ENCODE measurements at regions of chr1 and their contacts with region 1.

Region 1: GRCh38 chr1:231931846-231932454 is 305.4 kb downstream of the DISC1 start:
- DNase-seq: peak; percentile 76
- ATAC-seq: peak; percentile 71
- H3K4me3 Mint-ChIP-seq: no peak overlapping the region
- H3K27ac Mint-ChIP-seq: no peak overlapping the region
- H3K4me1 Mint-ChIP-seq: peaks cover 20% of the 10 kb centered on the region
- H3K27me3 Mint-ChIP-seq: no peaks in the 10 kb centered on the region
- CTCF ChIP-seq: peak; percentile 96

Region 2: GRCh38 chr1:231866392-231867331 is 65.3 kb before region 1 on chr1:
- CTCF ChIA-PET with region 1: interaction called, 36 read pairs
- POLR2A ChIA-PET with region 1: no interaction called
- intact Hi-C with region 1: loop called (anchors 5 kb)
- DNase-seq: peak; percentile 70
- ATAC-seq: peak; percentile 47
- H3K4me3 Mint-ChIP-seq: no peak overlapping the region
- H3K27ac Mint-ChIP-seq: no peak overlapping the region
- H3K4me1 Mint-ChIP-seq: peaks cover 22% of the 10 kb centered on the region
- H3K27me3 Mint-ChIP-seq: no peaks in the 10 kb centered on the region
- CTCF ChIP-seq: peak; percentile 96

Region 3: DNA sequence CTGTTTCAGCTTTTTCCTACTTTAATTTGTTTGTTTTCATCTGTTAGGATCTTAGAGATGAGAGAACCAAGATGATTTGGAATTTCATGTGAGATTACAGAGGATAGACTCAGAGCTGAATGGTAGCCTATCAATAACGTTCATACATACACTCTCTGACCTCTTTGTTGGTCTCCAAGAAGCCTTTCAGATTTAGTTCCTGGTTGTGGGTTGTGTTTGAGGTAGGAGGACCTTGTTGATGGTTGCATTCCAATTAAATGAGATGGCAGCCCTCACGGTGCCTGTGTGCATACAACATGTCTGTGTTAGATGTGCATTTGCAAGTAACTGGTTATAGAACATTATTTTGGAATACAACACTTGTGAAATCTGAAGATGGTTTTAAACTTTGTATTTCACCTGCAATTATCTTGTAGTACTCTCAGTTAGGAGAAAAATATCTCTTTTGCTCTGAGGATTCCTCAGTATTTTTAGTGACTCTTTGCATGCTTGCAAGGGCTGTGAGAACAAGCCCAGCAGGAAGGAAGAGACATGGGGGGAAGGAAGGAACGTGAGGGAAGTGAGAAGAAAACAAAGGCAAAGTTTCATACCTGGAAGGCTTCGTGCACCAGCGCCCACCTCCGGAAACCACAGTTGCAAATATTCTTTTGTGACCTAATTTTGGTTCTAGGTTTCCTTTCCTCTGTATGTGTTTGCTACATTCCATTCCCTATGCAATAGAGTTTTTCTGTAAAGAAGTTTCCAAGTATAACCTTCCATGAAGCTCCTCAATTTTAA is 13.5 kb before region 1 on chr1:
- CTCF ChIA-PET with region 1: interaction called, 13 read pairs
- POLR2A ChIA-PET with region 1: no interaction called
- intact Hi-C with region 1: no loop called
- DNase-seq: peak; percentile 51
- ATAC-seq: peak; percentile 18
- H3K4me3 Mint-ChIP-seq: peak overlapping the region; percentile 45
- H3K27ac Mint-ChIP-seq: peak overlapping the region; percentile 84
- H3K4me1 Mint-ChIP-seq: peaks cover 76% of the 10 kb centered on the region
- H3K27me3 Mint-ChIP-seq: no peaks in the 10 kb centered on the region
- CTCF ChIP-seq: no peak

Region 4: GRCh38 chr1:231953660-231954059 is 21.7 kb after region 1 on chr1:
- CTCF ChIA-PET with region 1: no interaction called
- POLR2A ChIA-PET with region 1: no interaction called
- intact Hi-C with region 1: no loop called
- DNase-seq: no peak
- ATAC-seq: no peak
- H3K4me3 Mint-ChIP-seq: no peak overlapping the region
- H3K27ac Mint-ChIP-seq: no peak overlapping the region
- H3K4me1 Mint-ChIP-seq: peaks cover 2% of the 10 kb centered on the region
- H3K27me3 Mint-ChIP-seq: no peaks in the 10 kb centered on the region
- CTCF ChIP-seq: no peak

Region 5: DNA sequence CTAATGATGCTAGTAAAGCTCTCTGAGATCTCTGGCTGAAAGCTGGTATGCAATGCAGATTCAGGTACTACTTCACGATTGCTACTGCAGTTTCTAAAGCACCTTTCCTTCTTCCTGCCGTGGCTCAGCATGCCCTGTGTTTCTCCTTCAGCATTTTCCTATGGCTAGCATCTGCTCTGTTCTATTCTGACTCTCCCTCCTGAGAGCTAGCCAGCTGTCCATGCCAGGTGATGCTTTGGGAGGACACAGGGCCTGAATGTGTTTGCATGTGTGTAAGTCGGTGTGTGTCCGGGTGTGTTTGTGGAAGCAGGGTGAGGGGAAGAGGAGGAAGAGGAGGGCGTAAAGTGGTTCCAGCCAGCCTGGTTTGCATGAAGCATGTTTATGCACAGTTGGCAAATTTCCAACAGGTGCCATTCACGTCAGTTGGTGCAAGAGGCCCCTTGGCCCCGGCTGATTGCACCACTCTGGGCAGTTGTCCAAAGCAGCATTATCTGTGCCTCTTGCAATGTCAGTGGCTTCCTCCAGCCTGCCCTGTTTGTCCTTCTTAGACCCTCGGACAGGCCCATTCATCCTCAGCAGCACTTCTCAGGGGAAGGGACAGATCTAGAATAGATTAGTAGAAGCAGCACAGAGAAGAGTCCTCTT is 127.9 kb after region 1 on chr1:
- CTCF ChIA-PET with region 1: no interaction called
- POLR2A ChIA-PET with region 1: no interaction called
- intact Hi-C with region 1: no loop called
- DNase-seq: no peak
- ATAC-seq: no peak
- H3K4me3 Mint-ChIP-seq: no peak overlapping the region
- H3K27ac Mint-ChIP-seq: no peak overlapping the region
- H3K4me1 Mint-ChIP-seq: no peaks in the 10 kb centered on the region
- H3K27me3 Mint-ChIP-seq: no peaks in the 10 kb centered on the region
- CTCF ChIP-seq: no peak

Region 6: DNA sequence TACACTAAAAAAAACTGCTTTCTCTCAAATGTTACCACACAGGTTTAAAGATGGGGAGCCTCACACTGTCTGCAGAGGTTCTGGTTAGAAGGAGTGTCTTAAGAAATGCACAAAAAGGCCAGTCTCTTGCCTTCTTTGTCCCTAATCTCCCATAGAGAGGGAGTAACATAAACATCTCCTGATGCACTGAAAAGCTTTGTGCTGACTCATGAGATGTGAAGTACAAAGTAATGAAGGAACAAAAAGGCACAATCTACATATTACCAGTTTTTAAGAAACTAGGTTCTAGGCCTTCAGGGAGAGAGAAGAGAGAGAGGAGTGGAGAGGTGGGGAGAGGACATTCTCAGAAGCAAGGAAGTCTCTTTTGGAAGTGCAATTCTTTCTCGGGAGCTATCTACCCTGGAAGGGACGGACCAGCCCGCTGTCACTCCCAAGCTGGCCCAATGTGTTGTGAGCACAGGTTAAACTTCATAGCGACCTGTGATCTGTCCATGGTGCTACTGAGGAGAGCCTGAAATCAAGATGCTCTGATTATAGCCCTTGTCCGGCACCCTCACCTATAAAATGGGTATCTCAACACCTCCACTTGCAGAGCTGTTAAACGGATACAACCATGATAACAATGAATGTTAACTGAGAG is 152.8 kb after region 1 on chr1:
- CTCF ChIA-PET with region 1: no interaction called
- POLR2A ChIA-PET with region 1: no interaction called
- intact Hi-C with region 1: no loop called
- DNase-seq: no peak
- ATAC-seq: no peak
- H3K4me3 Mint-ChIP-seq: no peak overlapping the region
- H3K27ac Mint-ChIP-seq: no peak overlapping the region
- H3K4me1 Mint-ChIP-seq: no peaks in the 10 kb centered on the region
- H3K27me3 Mint-ChIP-seq: no peaks in the 10 kb centered on the region
- CTCF ChIP-seq: no peak

Measured in activated CD8-positive, alpha-beta T cell treated with anti-CD3 and anti-CD28 coated beads for 36 hours (primary cell).